Activated CD4-positive, alpha-beta memory T cell treated with anti-CD3 and anti-CD28 coated beads for 36 hours (primary cell): ENCODE measurements at regions of chr1 and their contacts with region 1.

Region 1: DNA sequence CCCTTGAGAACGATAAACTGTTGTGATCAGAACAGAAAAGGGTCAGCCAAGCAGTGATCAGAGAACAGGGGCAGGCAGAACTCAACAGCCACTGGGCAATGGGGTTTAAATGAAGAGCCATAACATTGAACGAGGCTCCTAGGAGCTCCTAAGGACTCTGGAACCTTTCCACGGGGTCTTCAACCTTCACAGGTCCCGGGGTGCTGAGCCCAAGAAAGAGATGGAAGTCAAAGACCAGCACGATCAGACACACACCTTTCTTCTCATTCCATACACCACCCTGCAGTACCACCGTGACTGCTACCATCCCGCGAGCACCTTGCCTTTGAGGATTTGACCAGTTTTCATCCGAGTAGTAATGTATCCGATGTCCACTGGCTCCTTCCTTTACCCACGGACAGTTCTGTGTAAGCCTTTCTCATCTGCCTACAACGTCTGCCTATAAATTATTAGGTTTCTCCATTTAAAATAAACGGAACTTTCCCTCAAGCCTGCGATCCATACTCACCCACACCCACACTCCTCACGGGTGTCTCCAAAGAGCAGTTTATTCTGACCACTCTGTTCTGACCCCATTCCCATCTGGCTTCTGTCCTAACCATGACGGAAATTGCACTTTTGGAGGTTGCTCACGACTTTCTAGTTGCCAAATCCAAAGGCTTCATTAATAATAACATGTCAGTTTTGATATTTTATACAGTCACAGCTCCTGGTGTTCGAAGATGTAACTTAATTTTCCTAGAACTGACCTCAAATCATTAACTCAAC is 16.8 kb upstream of the HHAT start:
- DNase-seq: no peak
- H3K4me3 Mint-ChIP-seq: no peak overlapping the region
- H3K27ac Mint-ChIP-seq: no peak overlapping the region
- H3K4me1 Mint-ChIP-seq: peaks cover 6% of the 10 kb centered on the region
- H3K27me3 Mint-ChIP-seq: peaks cover 13% of the 10 kb centered on the region

Region 2: GRCh38 chr1:210143465-210144062 is 168.3 kb before region 1 on chr1:
- CTCF ChIA-PET with region 1: interaction called, 18 read pairs
- POLR2A ChIA-PET with region 1: no interaction called
- intact Hi-C with region 1: loop called (anchors 1 kb)
- DNase-seq: peak; percentile 66
- H3K4me3 Mint-ChIP-seq: no peak overlapping the region
- H3K27ac Mint-ChIP-seq: no peak overlapping the region
- H3K4me1 Mint-ChIP-seq: no peaks in the 10 kb centered on the region
- H3K27me3 Mint-ChIP-seq: peaks cover 12% of the 10 kb centered on the region

Region 3: DNA sequence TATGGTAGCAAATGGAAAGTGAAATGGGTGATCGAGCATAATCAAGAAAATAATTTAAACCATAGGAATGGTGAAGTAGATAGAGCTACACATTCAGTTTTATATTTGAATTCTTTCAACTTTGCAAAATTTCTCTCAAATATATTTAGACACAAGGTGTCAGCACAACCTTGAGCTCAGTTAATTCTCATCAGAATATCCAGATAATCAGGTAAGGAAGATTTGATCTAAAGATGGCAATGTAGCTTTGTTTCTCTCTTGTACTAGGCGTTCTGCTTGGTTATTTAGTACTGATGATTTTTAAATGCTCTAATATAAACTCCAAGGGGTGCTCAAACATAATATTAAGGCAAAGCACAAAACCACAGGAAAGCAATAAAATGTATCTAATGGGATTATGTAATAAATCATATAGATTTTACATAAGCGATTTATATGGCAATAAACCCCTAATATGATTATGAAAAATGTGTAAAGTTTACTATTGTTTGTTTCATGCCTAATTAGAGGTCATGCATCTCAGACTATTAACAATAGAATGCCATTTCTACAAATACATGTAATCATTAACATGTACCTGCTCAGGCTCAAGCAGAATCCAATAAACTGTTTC is 111.7 kb before region 1 on chr1:
- CTCF ChIA-PET with region 1: no interaction called
- POLR2A ChIA-PET with region 1: no interaction called
- intact Hi-C with region 1: no loop called
- DNase-seq: no peak
- H3K4me3 Mint-ChIP-seq: no peak overlapping the region
- H3K27ac Mint-ChIP-seq: no peak overlapping the region
- H3K4me1 Mint-ChIP-seq: no peaks in the 10 kb centered on the region
- H3K27me3 Mint-ChIP-seq: peaks cover 5% of the 10 kb centered on the region

Region 4: DNA sequence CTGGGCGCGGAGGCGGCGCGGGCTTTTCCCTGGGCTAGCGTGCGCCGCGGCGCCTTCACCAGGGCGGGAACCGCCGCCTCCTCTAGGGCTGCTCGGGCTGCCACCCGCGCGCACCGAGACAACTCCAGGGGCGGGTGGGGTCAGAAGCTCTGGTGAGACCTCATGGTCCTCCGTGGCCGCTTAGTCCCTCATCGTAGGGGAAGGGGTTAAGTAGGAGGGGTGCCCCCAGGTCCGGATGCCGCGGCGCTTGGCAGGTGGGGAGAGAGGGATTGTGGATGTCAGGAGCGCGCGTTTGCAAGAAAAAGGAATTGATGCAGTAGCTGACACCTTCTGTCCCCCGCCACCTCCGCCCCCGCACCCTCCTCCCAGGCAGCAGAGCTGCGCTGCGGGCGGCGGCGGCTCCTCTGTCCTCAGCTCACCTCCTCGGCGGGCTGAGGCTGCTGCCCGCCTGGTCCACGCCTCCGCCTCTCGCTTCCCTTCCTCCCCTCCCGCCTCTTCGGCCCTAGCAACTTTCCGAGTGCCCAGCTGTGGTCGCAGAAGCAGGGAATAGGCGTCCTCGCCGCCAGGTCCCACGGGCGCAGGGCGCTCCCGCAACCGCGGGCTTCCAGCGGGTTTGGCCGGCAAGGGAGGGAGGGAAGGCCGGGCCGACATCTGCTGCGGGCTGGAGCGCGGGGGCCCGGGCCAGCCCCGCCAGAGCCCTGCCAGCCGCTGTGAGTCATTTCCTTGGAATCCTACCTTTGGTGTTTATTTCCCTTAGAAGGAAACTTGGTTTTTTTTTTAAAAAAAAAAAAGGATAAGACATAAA is 78.5 kb before region 1 on chr1:
- CTCF ChIA-PET with region 1: no interaction called
- POLR2A ChIA-PET with region 1: no interaction called
- intact Hi-C with region 1: loop called (anchors 5 kb)
- DNase-seq: peak; percentile 53
- H3K4me3 Mint-ChIP-seq: peak overlapping the region; percentile 36
- H3K27ac Mint-ChIP-seq: no peak overlapping the region
- H3K4me1 Mint-ChIP-seq: peaks cover 8% of the 10 kb centered on the region
- H3K27me3 Mint-ChIP-seq: peaks cover 54% of the 10 kb centered on the region

Region 5: GRCh38 chr1:210250998-210251679 is 60.8 kb before region 1 on chr1:
- CTCF ChIA-PET with region 1: no interaction called
- POLR2A ChIA-PET with region 1: no interaction called
- intact Hi-C with region 1: loop called (anchors 5 kb)
- DNase-seq: peak; percentile 50
- H3K4me3 Mint-ChIP-seq: peak overlapping the region; percentile 38
- H3K27ac Mint-ChIP-seq: no peak overlapping the region
- H3K4me1 Mint-ChIP-seq: peaks cover 23% of the 10 kb centered on the region
- H3K27me3 Mint-ChIP-seq: peaks cover 66% of the 10 kb centered on the region

Region 6: GRCh38 chr1:210280221-210280620 is 31.7 kb before region 1 on chr1:
- CTCF ChIA-PET with region 1: no interaction called
- POLR2A ChIA-PET with region 1: no interaction called
- intact Hi-C with region 1: no loop called
- DNase-seq: no peak
- H3K4me3 Mint-ChIP-seq: no peak overlapping the region
- H3K27ac Mint-ChIP-seq: no peak overlapping the region
- H3K4me1 Mint-ChIP-seq: no peaks in the 10 kb centered on the region
- H3K27me3 Mint-ChIP-seq: peaks cover 19% of the 10 kb centered on the region

Region 7: GRCh38 chr1:210505601-210506496 is 193.9 kb after region 1 on chr1:
- CTCF ChIA-PET with region 1: no interaction called
- POLR2A ChIA-PET with region 1: no interaction called
- intact Hi-C with region 1: no loop called
- DNase-seq: no peak
- H3K4me3 Mint-ChIP-seq: no peak overlapping the region
- H3K27ac Mint-ChIP-seq: no peak overlapping the region
- H3K4me1 Mint-ChIP-seq: no peaks in the 10 kb centered on the region
- H3K27me3 Mint-ChIP-seq: no peaks in the 10 kb centered on the region